ENCODE measurements at regions of chr4 and their contacts with region 1.

Region 1: GRCh38 chr4:67909905-67910584 is 26.2 kb upstream of the TMPRSS11D start:
- DNase-seq: no peak
- ATAC-seq: no peak
- H3K4me3 ChIP-seq: no peak overlapping the region
- H3K27ac ChIP-seq: no peak overlapping the region
- H3K4me1 ChIP-seq: no peaks in the 10 kb centered on the region
- H3K27me3 ChIP-seq: no peaks in the 10 kb centered on the region
- CTCF ChIP-seq: peak; percentile 54; the same call in 1 of the 2 replicates

Region 2: GRCh38 chr4:67545199-67546003 is 364.6 kb before region 1 on chr4 and contains the start of gene CENPC:
- CTCF ChIA-PET with region 1: no interaction called
- POLR2A ChIA-PET with region 1: no interaction called
- in situ Hi-C with region 1: no loop called
- intact Hi-C with region 1: loop called (anchors 5 kb)
- DNase-seq: peak; percentile 72
- ATAC-seq: peak; percentile 100
- H3K4me3 ChIP-seq: peak within 1 kb of the TSS; percentile 92 to 95
- H3K27ac ChIP-seq: peak within 1 kb of the TSS; percentile 91
- H3K4me1 ChIP-seq: peaks cover 3% of the 10 kb centered on the region; the same call in 1 of the 2 replicates
- H3K27me3 ChIP-seq: no peaks in the 10 kb centered on the region
- CTCF ChIP-seq: no peak
- total RNA-seq, gene CENPC: 10.1 TPM

Region 3: GRCh38 chr4:67871867-67872266 is 38.2 kb before region 1 on chr4:
- CTCF ChIA-PET with region 1: no interaction called
- POLR2A ChIA-PET with region 1: no interaction called
- in situ Hi-C with region 1: no loop called
- intact Hi-C with region 1: loop called (anchors 5 kb)
- DNase-seq: peak; percentile 27
- ATAC-seq: peak; percentile 73; the same call in 1 of the 2 replicates
- H3K4me3 ChIP-seq: no peak overlapping the region
- H3K27ac ChIP-seq: no peak overlapping the region
- H3K4me1 ChIP-seq: no peaks in the 10 kb centered on the region
- H3K27me3 ChIP-seq: no peaks in the 10 kb centered on the region
- CTCF ChIP-seq: peak; percentile 41; the same call in 1 of the 2 replicates

Region 4: DNA sequence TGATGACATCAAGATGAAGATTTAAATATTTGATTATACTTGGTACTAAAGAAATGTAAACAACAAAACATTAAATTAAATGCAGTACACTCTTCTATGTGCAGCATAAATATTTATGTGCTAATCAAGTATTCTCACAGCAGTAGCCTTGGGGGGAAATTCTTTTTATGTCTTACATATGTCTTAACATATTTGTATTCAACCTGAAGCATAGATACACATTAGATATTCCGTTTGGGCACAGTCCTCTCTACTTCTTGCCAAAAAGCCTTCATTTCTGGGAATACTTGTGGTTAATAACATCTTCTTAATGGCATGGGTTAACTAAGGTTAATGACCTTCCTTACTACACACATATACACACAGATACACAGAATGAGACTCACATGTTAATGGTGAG is 199.8 kb after region 1 on chr4:
- CTCF ChIA-PET with region 1: no interaction called
- POLR2A ChIA-PET with region 1: no interaction called
- in situ Hi-C with region 1: no loop called
- intact Hi-C with region 1: no loop called
- DNase-seq: no peak
- ATAC-seq: no peak
- H3K4me3 ChIP-seq: no peak overlapping the region
- H3K27ac ChIP-seq: no peak overlapping the region
- H3K4me1 ChIP-seq: no peaks in the 10 kb centered on the region
- H3K27me3 ChIP-seq: no peaks in the 10 kb centered on the region
- CTCF ChIP-seq: no peak

Measured in Panc1 (cell line).